Left cardiac atrium (tissue), 4 donors: ENCODE measurements at regions of chr2 and their contacts with region 1.

Region 1: GRCh38 chr2:6773007-6773693 is 92.6 kb downstream of the CMPK2 start:
- DNase-seq: peak; percentile 57
- ATAC-seq: peak; percentile 89

Region 2: GRCh38 chr2:6352906-6353515 is 420.1 kb before region 1 on chr2:
- intact Hi-C with region 1: loop called (anchors 1 to 5 kb)
- DNase-seq: peak; percentile 46
- ATAC-seq: no peak

Region 3: DNA sequence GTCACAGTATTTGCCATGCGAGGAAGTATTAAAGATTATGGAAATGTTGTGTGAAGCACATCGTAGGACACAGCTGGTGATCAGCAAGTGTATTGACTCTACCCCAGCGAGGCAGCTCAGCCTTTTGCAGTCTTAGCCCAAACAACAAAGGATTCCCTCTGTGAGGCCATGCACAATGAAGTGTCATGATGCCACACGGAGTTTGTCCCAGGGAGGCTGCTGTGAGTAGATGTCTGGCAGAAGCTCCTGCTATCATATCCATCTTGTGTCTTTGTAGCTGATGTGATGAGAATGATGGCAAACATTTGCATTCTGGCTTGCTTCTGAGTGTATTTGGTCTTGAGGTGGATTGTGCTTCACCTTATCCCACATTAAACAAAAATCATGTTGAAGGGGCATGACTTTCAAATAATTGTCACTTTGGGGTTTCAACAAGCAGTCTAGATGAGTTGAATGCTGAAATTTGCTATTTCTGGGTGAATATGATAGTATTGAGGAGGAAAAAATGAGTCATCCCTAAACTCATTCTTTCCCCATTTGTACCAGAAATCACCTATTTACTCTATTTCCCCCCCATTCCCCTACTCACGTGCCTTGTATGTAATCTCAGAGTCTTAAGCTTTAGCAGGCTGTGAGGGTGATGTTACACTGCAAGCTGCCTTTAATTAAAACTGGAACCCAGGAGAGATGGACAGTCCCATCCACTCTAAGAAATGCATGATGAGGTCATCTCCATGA is 417.6 kb after region 1 on chr2:
- intact Hi-C with region 1: no loop called
- DNase-seq: no peak
- ATAC-seq: no peak